ENCODE measurements at regions of chr11 and their contacts with region 1.

Region 1: GRCh38 chr11:120172054-120172911 is 34.4 kb upstream of the TRIM29 start:
- DNase-seq: peak in 8 of 9 experiments; percentile 11 to 65 (median 46)
- ATAC-seq: peak; percentile 64
- H3K4me3 ChIP-seq: no peak overlapping the region
- H3K4me3 Mint-ChIP-seq: peak overlapping the region; percentile 29
- H3K27ac ChIP-seq: no peak overlapping the region
- H3K27ac Mint-ChIP-seq: no peak overlapping the region
- H3K4me1 ChIP-seq: peaks cover 11% of the 10 kb centered on the region
- H3K4me1 Mint-ChIP-seq: peaks cover 10% of the 10 kb centered on the region
- H3K27me3 ChIP-seq: peaks cover 8 to 10% of the 10 kb centered on the region in 2 experiments
- H3K27me3 Mint-ChIP-seq: peaks cover 50% of the 10 kb centered on the region
- CTCF ChIP-seq: peak; percentile 61

Region 2: GRCh38 chr11:120128782-120129172 is 43.5 kb before region 1 on chr11:
- CTCF ChIA-PET with region 1: no interaction called
- POLR2A ChIA-PET with region 1: no interaction called
- intact Hi-C with region 1: no loop called
- DNase-seq: no peak
- ATAC-seq: no peak
- H3K4me3 ChIP-seq: no peak overlapping the region
- H3K4me3 Mint-ChIP-seq: no peak overlapping the region
- H3K27ac ChIP-seq: no peak overlapping the region
- H3K27ac Mint-ChIP-seq: no peak overlapping the region
- H3K4me1 ChIP-seq: no peaks in the 10 kb centered on the region
- H3K4me1 Mint-ChIP-seq: no peaks in the 10 kb centered on the region
- H3K27me3 ChIP-seq: no peaks in the 10 kb centered on the region
- H3K27me3 Mint-ChIP-seq: peaks cover 6% of the 10 kb centered on the region
- CTCF ChIP-seq: no peak

Region 3: DNA sequence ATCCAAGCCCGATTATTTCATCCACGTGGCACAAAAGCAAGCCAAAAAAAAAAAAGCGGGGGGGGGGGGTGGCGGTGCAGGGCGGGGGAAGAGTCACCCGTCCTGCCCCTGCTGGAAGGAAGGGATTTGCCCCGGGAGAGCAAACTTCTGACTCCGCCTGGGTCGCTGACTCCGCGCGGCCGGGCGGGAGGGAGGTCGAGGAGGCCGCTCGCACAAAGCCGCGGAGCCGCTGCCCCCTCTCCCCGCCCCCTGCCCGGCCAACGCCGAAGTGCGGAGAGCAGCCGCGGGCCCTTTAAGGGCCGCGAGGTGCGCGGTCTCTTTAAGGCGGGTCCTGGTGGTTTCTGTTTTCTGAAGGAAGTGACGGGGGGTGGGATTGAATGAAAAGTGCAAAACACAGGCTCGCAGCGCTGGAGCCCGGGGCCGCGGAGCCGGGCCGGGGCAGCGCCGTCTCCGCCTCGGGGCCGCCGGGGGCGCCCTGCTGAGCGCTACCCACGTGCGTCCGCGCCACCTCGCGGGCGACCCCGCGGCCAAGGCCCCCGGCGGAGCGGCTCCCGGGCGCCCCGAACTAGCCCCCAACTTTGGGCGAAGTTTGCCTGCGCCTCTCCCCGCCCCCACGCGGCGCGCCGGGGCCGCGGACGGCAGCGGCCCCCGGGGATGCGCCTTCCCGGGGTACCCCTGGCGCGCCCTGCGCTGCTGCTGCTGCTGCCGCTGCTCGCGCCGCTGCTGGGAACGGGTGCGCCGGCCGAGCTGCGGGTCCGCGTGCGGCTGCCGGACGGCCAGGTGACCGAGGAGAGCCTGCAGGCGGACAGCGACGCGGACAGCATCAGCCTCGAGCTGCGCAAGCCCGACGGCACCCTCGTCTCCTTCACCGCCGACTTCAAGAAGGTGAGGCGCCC is 38.6 kb after region 1 on chr11 and contains the start of gene OAF:
- CTCF ChIA-PET with region 1: interaction called, 4 read pairs
- POLR2A ChIA-PET with region 1: no interaction called
- intact Hi-C with region 1: loop called in 1 of 2 experiments (anchors 5 kb)
- DNase-seq: peak; percentile 10 to 86 (median 57)
- ATAC-seq: peak; percentile 91
- H3K4me3 ChIP-seq: peak within 1 kb of the TSS; percentile 51 to 87
- H3K4me3 Mint-ChIP-seq: peak within 1 kb of the TSS; percentile 93
- H3K27ac ChIP-seq: peak within 1 kb of the TSS in 1 of 2 experiments; percentile 20
- H3K27ac Mint-ChIP-seq: peak within 1 kb of the TSS; percentile 63
- H3K4me1 ChIP-seq: peaks cover 13% of the 10 kb centered on the region
- H3K4me1 Mint-ChIP-seq: peaks cover 21% of the 10 kb centered on the region
- H3K27me3 ChIP-seq: peaks cover 0 to 2% of the 10 kb centered on the region in 2 experiments
- H3K27me3 Mint-ChIP-seq: peaks cover 15% of the 10 kb centered on the region
- CTCF ChIP-seq: no peak
- total RNA-seq, gene OAF: 5.5 to 6.5 TPM

Region 4: DNA sequence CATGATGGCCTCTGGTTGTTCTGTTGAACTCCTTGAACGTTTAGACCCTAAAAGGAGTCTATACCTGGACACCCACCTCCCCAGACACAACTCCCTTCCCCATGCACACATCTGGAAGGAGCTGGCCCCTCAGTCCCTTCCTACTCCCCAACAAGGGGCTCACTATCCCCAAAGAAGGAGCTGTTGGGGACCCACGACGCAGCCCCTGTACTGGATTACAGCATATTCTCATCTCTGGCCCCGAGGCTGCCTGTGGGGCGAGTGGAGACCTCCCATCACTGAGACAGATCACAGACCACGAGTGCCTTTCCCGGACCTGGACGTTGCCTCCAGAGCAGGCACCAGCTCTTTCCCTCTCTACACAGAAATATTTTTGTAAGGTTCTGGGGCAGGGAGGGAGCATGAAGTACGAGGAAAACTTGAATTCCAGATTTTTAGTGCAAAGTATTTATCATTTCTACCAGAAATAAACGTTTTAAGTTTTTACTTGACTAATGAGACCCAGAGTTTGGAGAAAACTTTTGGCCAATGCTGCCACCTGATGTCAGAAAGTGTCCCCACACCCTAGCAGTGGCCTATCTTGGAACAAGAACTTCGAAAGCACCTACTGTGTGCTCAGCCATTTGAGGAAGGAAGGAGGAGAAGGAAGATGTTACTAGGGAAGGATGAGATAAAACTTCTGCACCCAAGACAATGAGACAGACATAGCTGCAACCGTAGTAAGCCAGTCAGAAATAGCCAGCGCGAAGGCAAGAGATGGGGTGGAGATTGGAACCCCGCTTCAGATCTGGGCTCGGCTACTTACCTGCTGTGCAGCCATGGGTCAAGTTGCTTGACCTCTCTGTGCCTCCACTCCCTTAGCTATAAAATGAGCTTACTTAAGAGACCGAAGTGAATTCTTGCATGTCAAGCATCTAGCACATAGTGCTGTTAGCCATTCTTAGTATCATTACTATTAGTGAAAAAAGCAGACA is 57.5 kb after region 1 on chr11:
- CTCF ChIA-PET with region 1: interaction called, 97 read pairs
- POLR2A ChIA-PET with region 1: no interaction called
- intact Hi-C with region 1: loop called in 1 of 2 experiments (anchors 1 kb)
- DNase-seq: peak in 3 of 9 experiments; percentile 13 to 43 (median 36)
- ATAC-seq: no peak
- H3K4me3 ChIP-seq: no peak overlapping the region
- H3K4me3 Mint-ChIP-seq: no peak overlapping the region
- H3K27ac ChIP-seq: no peak overlapping the region
- H3K27ac Mint-ChIP-seq: no peak overlapping the region
- H3K4me1 ChIP-seq: peaks cover 4% of the 10 kb centered on the region
- H3K4me1 Mint-ChIP-seq: peaks cover 6% of the 10 kb centered on the region
- H3K27me3 ChIP-seq: peaks cover 0 to under 1% of the 10 kb centered on the region in 2 experiments
- H3K27me3 Mint-ChIP-seq: peaks cover 6% of the 10 kb centered on the region
- CTCF ChIP-seq: peak; percentile 48

Region 5: DNA sequence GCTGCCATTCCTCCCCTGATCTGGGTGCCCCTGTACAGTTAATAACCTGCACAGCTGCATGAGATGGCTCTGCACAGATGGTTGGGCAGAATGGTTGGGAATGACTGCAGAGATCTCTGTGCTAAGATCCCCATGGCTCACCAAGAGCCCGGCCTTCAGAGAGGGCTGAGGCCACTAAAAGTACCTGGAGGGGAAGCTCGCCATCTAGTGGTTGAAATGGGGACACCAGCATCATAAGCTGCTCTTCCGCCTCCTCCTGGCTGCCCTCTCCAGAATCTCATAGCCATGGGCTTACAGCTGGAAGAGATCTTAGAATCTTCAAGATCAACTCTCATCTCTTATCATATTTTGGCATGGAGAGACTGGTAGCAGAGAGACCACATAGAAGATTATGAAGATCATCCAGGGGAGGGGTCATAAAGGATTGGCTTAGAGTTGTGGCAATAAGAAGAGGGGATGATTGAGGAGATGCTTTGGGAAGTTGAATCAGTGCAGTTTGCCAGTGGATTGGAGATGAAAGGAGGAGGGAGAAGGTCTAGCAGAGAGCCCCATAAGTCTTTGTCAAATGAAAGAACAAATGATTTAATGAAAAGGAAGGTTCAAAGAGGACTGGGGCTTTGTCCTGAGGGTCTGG is 130.8 kb after region 1 on chr11:
- CTCF ChIA-PET with region 1: interaction called, 38 read pairs
- POLR2A ChIA-PET with region 1: no interaction called
- intact Hi-C with region 1: loop called in 1 of 2 experiments (anchors 1 kb)
- DNase-seq: peak; percentile 13 to 74 (median 49)
- ATAC-seq: peak; percentile 68
- H3K4me3 ChIP-seq: no peak overlapping the region
- H3K4me3 Mint-ChIP-seq: no peak overlapping the region
- H3K27ac ChIP-seq: no peak overlapping the region
- H3K27ac Mint-ChIP-seq: no peak overlapping the region
- H3K4me1 ChIP-seq: no peaks in the 10 kb centered on the region
- H3K4me1 Mint-ChIP-seq: no peaks in the 10 kb centered on the region
- H3K27me3 ChIP-seq: peaks cover 0 to 1% of the 10 kb centered on the region in 2 experiments
- H3K27me3 Mint-ChIP-seq: peaks cover 28% of the 10 kb centered on the region
- CTCF ChIP-seq: peak; percentile 89

Region 6: DNA sequence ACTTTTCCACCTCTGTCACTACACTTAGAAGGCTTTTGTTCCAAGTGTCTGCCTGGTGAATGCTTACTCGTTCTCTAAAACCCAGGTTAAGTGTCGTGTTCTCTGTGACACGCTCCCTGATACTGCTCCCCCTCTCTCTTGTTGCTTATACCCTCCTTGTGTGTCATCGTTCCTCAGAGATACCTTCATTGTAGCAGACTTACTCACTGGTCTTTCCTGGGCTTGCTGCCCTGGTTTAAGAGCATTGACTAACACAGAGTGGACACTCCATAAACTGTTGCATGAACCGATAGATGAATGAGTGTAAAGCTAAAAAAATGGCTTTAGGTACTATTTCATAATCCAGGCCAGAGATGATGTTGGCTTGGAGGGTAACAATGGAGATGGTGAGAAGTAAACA is 510.6 kb after region 1 on chr11:
- CTCF ChIA-PET with region 1: no interaction called
- POLR2A ChIA-PET with region 1: no interaction called
- intact Hi-C with region 1: loop called in 1 of 2 experiments (anchors 10 kb)
- DNase-seq: no peak
- ATAC-seq: no peak
- H3K4me3 ChIP-seq: no peak overlapping the region
- H3K4me3 Mint-ChIP-seq: no peak overlapping the region
- H3K27ac ChIP-seq: no peak overlapping the region
- H3K27ac Mint-ChIP-seq: no peak overlapping the region
- H3K4me1 ChIP-seq: no peaks in the 10 kb centered on the region
- H3K4me1 Mint-ChIP-seq: no peaks in the 10 kb centered on the region
- H3K27me3 ChIP-seq: no peaks in the 10 kb centered on the region
- H3K27me3 Mint-ChIP-seq: peaks cover 25% of the 10 kb centered on the region
- CTCF ChIP-seq: no peak

Measured in CD8-positive, alpha-beta T cell (primary cell).